K562 (cell line): ENCODE measurements at regions of chr6 and their contacts with region 1.

Region 1: DNA sequence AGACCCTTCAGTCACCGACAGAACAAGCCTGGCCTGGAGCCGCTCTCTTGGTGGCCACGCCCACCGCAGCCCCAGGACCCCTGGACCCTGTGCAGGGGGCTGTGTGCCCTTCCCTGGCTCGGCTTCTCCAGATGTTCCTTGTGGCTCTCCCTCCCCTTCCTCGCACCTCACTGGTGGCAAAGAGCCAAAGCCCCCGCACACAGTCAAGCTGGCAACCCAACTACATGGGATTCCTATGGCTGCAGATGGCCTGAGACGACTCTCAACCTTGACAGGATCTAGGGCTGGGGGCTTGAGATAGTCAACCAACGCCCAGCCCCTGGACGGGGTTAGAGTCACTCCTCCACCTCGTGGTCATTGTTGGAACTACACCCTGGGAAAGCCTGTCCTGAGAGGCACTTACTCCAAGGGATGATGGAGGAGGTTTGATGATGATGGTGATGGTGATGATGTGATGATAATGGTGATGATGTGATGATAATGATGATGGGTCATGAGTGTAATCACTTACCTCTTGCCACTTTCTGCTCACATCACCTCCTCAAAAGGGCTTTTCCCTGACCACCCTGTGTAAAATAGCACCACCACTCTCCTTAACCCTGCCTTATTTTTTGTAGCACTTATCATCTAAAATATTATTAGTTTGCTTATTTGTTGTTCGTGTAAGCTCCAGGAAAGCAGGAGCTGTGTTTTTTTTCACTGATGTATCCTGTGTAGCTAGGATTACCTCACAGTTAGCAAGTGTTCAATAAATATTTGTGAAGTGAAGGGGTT is 278.4 kb downstream of the LRFN2 start:
- DNase-seq: peak; percentile 77 to 91 (median 84)
- ATAC-seq: peak; percentile 97
- H3K4me3 ChIP-seq: no peak overlapping the region
- H3K27ac ChIP-seq: no peak overlapping the region
- H3K4me1 ChIP-seq: peaks cover 0 to 6% of the 10 kb centered on the region in 2 experiments; a peak in 2 of 5 replicates
- H3K27me3 ChIP-seq: peaks cover 0 to 31% of the 10 kb centered on the region in 2 experiments; a peak in 3 of 5 replicates
- CTCF ChIP-seq: peak; percentile 79 to 96 (median 89)
- EP300 ChIP-seq: no peak
- POLR2A ChIP-seq: no peak
- RAD21 ChIP-seq: peak; percentile 90 to 91

Region 2: GRCh38 chr6:39347906-39348585 is 960.7 kb before region 1 on chr6:
- CTCF ChIA-PET with region 1: no interaction called
- POLR2A ChIA-PET with region 1: no interaction called
- in situ Hi-C with region 1: loop called (anchors 25 kb)
- intact Hi-C with region 1: loop called (anchors 5 kb)
- DNase-seq: peak; percentile 74 to 83 (median 80)
- ATAC-seq: peak; percentile 96
- H3K4me3 ChIP-seq: no peak overlapping the region
- H3K27ac ChIP-seq: no peak overlapping the region
- H3K4me1 ChIP-seq: no peaks in the 10 kb centered on the region
- H3K27me3 ChIP-seq: peaks cover 20 to 30% of the 10 kb centered on the region in 2 experiments; a peak in 4 of 5 replicates
- CTCF ChIP-seq: peak; percentile 83 to 96 (median 89)
- EP300 ChIP-seq: no peak
- POLR2A ChIP-seq: no peak
- RAD21 ChIP-seq: peak; percentile 65 to 84

Region 3: DNA sequence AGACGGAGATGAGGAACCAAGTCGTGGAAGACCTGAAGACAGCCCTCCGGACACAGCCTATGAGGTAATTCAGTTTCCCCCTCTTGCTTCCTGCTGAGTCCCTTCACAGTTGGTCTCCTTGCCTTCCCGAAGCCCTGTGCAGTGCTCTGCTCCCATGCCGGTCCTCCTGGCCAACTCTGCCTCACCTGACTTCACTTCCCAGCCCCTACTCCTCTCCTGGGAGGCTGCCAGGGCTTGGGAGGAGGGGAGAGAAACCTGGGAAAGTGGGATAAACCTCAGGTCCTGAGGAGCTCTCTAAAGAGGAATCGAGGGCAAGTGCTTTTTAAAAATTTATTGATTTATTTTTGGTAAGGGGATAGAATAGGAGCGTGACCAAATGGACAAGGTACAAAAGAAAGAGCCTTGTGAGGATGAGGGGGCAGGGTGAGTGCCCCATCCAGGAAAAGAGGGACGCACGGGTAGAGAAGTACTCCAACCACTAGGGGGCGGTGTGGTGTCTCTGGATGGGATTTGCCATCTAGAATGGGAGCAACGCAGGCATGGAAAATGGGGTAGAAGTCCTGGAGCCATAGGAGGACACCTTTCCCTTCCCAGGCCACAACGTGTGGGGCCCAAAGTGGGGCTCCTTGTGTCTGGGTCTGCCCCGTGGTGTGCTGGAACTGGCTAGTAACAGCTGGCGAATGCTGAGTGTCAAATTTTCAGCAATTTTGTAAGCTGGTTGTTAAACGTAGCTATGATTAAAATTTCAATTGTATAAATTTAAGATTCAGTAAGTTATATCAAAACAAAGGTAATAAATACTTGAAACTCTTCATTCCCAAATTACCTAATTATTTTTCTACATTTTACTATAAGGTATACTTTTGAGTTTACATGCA is 443.5 kb before region 1 on chr6:
- CTCF ChIA-PET with region 1: interaction called, 4 read pairs
- POLR2A ChIA-PET with region 1: no interaction called
- in situ Hi-C with region 1: no loop called
- intact Hi-C with region 1: loop called (anchors 2 kb)
- DNase-seq: peak; percentile 83 to 85 (median 84)
- ATAC-seq: peak; percentile 97
- H3K4me3 ChIP-seq: no peak overlapping the region
- H3K27ac ChIP-seq: no peak overlapping the region
- H3K4me1 ChIP-seq: no peaks in the 10 kb centered on the region
- H3K27me3 ChIP-seq: peaks cover 1 to 4% of the 10 kb centered on the region in 2 experiments; a peak in 3 of 5 replicates
- CTCF ChIP-seq: peak; percentile 78 to 94 (median 84)
- EP300 ChIP-seq: no peak
- POLR2A ChIP-seq: no peak
- RAD21 ChIP-seq: peak; percentile 61 to 79

Region 4: GRCh38 chr6:39980839-39981580 is 327.7 kb before region 1 on chr6:
- CTCF ChIA-PET with region 1: interaction called, 22 read pairs
- POLR2A ChIA-PET with region 1: no interaction called
- in situ Hi-C with region 1: loop called (anchors 5 kb)
- intact Hi-C with region 1: loop called (anchors 1 kb)
- DNase-seq: peak; percentile 62 to 78 (median 66)
- ATAC-seq: peak; percentile 94
- H3K4me3 ChIP-seq: no peak overlapping the region
- H3K27ac ChIP-seq: no peak overlapping the region
- H3K4me1 ChIP-seq: peaks cover 0 to 9% of the 10 kb centered on the region in 2 experiments; a peak in 2 of 5 replicates
- H3K27me3 ChIP-seq: no peaks in the 10 kb centered on the region; a peak in 1 of 5 replicates
- CTCF ChIP-seq: peak; percentile 62 to 93 (median 67)
- EP300 ChIP-seq: no peak
- POLR2A ChIP-seq: no peak
- RAD21 ChIP-seq: peak; percentile 83 to 85

Region 5: DNA sequence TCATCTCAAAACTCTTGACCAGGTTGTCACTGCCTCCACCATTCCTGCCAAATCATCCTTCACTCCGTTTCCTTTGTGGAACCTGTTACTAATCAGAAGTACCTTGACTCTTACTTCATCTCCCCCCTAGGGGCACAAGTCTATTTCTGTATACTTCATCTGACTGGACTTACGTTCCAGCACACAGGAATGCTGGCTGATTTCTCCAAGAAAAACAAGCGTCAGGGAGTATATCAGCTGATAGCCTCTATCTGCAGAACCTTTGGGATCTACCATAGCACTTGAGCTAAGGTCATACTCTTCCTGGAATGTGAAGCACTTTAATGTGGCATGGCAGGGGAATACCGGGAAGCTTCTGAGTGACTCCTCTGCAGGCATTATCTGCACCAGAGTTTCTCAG is 196.4 kb before region 1 on chr6:
- CTCF ChIA-PET with region 1: no interaction called
- POLR2A ChIA-PET with region 1: no interaction called
- in situ Hi-C with region 1: no loop called
- intact Hi-C with region 1: no loop called
- DNase-seq: peak in 2 of 4 experiments; percentile 6 to 18
- ATAC-seq: 0 out of 3 replicates have a peak, but pooled peaks have one; percentile 42
- H3K4me3 ChIP-seq: no peak overlapping the region
- H3K27ac ChIP-seq: no peak overlapping the region
- H3K4me1 ChIP-seq: no peaks in the 10 kb centered on the region
- H3K27me3 ChIP-seq: no peaks in the 10 kb centered on the region; a peak in 1 of 5 replicates
- CTCF ChIP-seq: peak in 1 of 3 experiments; percentile 35; a peak in 2 of 6 replicates
- EP300 ChIP-seq: no peak
- POLR2A ChIP-seq: no peak
- RAD21 ChIP-seq: no peak

Region 6: GRCh38 chr6:40244699-40245098 is 64.0 kb before region 1 on chr6:
- CTCF ChIA-PET with region 1: no interaction called
- POLR2A ChIA-PET with region 1: no interaction called
- in situ Hi-C with region 1: no loop called
- intact Hi-C with region 1: no loop called
- DNase-seq: no peak
- ATAC-seq: no peak
- H3K4me3 ChIP-seq: no peak overlapping the region
- H3K27ac ChIP-seq: no peak overlapping the region
- H3K4me1 ChIP-seq: no peaks in the 10 kb centered on the region
- H3K27me3 ChIP-seq: peaks cover 0 to 6% of the 10 kb centered on the region in 2 experiments; a peak in 2 of 5 replicates
- CTCF ChIP-seq: no peak
- EP300 ChIP-seq: no peak
- POLR2A ChIP-seq: no peak
- RAD21 ChIP-seq: no peak

Region 7: DNA sequence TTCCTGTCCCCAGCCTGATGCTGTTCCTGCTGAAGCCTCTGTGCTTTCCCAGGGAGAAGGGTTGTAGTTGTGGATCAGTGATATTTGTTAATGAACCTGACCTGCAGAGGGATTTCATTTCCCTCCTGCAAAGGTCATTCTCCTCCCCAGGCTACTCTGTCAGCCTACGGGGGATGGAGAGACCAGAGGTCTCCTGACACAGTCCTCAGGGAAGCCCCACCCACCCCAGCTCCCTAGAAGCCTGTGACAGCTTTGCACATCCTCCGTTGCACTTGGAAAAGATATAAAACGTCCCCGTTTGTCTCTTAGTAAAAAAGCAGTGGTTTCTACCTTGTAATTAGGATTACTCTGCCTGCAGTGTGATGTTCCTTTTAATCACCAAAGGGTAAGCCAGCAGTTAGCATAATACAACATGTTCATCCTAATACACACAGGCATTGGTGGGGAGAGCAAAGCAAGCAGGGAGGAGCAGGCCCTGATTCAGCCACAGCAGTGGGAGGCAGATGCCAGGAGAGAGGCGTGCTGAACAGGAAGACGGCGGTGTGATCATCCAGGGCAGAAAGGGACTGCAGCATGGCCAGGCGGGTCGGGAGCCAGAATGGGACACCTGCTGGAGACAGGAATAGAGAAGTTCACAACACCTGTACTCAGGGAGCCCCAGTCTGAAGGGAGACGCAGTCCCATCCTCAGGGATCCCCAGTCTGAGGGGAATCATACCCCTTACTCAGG is 15.1 kb before region 1 on chr6:
- CTCF ChIA-PET with region 1: no interaction called
- POLR2A ChIA-PET with region 1: no interaction called
- in situ Hi-C with region 1: no loop called
- intact Hi-C with region 1: no loop called
- DNase-seq: no peak
- ATAC-seq: no peak
- H3K4me3 ChIP-seq: no peak overlapping the region
- H3K27ac ChIP-seq: no peak overlapping the region
- H3K4me1 ChIP-seq: no peaks in the 10 kb centered on the region
- H3K27me3 ChIP-seq: peaks cover 5 to 7% of the 10 kb centered on the region in 2 experiments; a peak in 2 of 5 replicates
- CTCF ChIP-seq: no peak
- EP300 ChIP-seq: no peak
- POLR2A ChIP-seq: no peak
- RAD21 ChIP-seq: no peak

Region 8: DNA sequence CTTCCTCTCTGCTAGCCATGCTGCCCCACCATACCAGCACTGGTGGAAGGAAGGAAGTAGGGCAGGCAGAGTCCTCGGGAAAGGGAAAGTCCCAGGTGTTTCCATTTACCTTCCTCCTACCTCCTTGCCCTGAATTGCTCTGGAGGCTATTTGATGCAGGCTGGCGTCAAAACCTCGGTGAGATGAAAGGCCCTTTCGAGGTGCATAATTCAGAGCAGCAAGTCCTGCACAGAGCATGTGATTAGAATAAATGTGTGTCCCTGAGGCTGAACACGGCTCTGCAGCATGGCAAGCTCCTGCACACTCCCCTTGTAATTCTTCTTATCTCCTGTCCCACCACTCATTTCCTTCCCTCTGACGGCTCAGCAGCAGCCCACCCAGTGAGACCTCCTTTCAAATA is 377.1 kb after region 1 on chr6:
- CTCF ChIA-PET with region 1: no interaction called
- POLR2A ChIA-PET with region 1: no interaction called
- in situ Hi-C with region 1: no loop called
- intact Hi-C with region 1: no loop called
- DNase-seq: no peak
- ATAC-seq: no peak
- H3K4me3 ChIP-seq: no peak overlapping the region
- H3K27ac ChIP-seq: no peak overlapping the region
- H3K4me1 ChIP-seq: peaks cover 3 to 4% of the 10 kb centered on the region in 2 experiments; a peak in 1 of 5 replicates
- H3K27me3 ChIP-seq: peaks cover 3 to 9% of the 10 kb centered on the region in 2 experiments; a peak in 1 of 5 replicates
- CTCF ChIP-seq: no peak
- EP300 ChIP-seq: no peak
- POLR2A ChIP-seq: no peak
- RAD21 ChIP-seq: no peak